GM12878 (cell line): ENCODE measurements at regions of chrX and their contacts with region 1.

Region 1: GRCh38 chrX:4547213-4547836 is 833.9 kb upstream of the PRKX start:
- DNase-seq: peak; percentile 5
- ATAC-seq: peak; percentile 64
- H3K4me3 ChIP-seq: no peak overlapping the region
- H3K27ac ChIP-seq: no peak overlapping the region
- H3K4me1 ChIP-seq: no peaks in the 10 kb centered on the region
- H3K27me3 ChIP-seq: no peaks in the 10 kb centered on the region
- CTCF ChIP-seq: peak; percentile 80 to 89 (median 82)
- EP300 ChIP-seq: no peak
- POLR2A ChIP-seq: no peak
- RAD21 ChIP-seq: peak; percentile 85

Region 2: GRCh38 chrX:3962511-3963311 is 584.6 kb before region 1 on chrX:
- CTCF ChIA-PET with region 1: interaction called, 8 read pairs
- POLR2A ChIA-PET with region 1: no interaction called
- RAD21 ChIA-PET with region 1: interaction called, 11 read pairs
- SMC1A ChIA-PET with region 1: interaction called, 10 read pairs
- in situ Hi-C with region 1: no loop called
- intact Hi-C with region 1: loop called (anchors 5 kb)
- DNase-seq: no peak
- ATAC-seq: peak; percentile 69
- H3K4me3 ChIP-seq: no peak overlapping the region
- H3K27ac ChIP-seq: no peak overlapping the region
- H3K4me1 ChIP-seq: no peaks in the 10 kb centered on the region
- H3K27me3 ChIP-seq: no peaks in the 10 kb centered on the region
- CTCF ChIP-seq: peak; percentile 47 to 57 (median 49); a peak in 5 of 6 replicates
- EP300 ChIP-seq: no peak
- POLR2A ChIP-seq: no peak
- RAD21 ChIP-seq: peak; percentile 36

Region 3: GRCh38 chrX:4735259-4735658 is 187.9 kb after region 1 on chrX:
- CTCF ChIA-PET with region 1: no interaction called
- POLR2A ChIA-PET with region 1: no interaction called
- RAD21 ChIA-PET with region 1: no interaction called
- SMC1A ChIA-PET with region 1: no interaction called
- in situ Hi-C with region 1: no loop called
- intact Hi-C with region 1: no loop called
- DNase-seq: no peak
- ATAC-seq: no peak
- H3K4me3 ChIP-seq: no peak overlapping the region
- H3K27ac ChIP-seq: no peak overlapping the region
- H3K4me1 ChIP-seq: no peaks in the 10 kb centered on the region
- H3K27me3 ChIP-seq: no peaks in the 10 kb centered on the region
- CTCF ChIP-seq: no peak
- EP300 ChIP-seq: no peak
- POLR2A ChIP-seq: no peak
- RAD21 ChIP-seq: no peak

Region 4: GRCh38 chrX:5113128-5113527 is 565.8 kb after region 1 on chrX:
- CTCF ChIA-PET with region 1: interaction called, 5 read pairs
- POLR2A ChIA-PET with region 1: no interaction called
- RAD21 ChIA-PET with region 1: no interaction called
- SMC1A ChIA-PET with region 1: no interaction called
- in situ Hi-C with region 1: no loop called
- intact Hi-C with region 1: loop called (anchors 1 kb)
- DNase-seq: no peak
- ATAC-seq: peak; percentile 44; the same call in 2 of the 3 replicates
- H3K4me3 ChIP-seq: no peak overlapping the region
- H3K27ac ChIP-seq: no peak overlapping the region
- H3K4me1 ChIP-seq: no peaks in the 10 kb centered on the region
- H3K27me3 ChIP-seq: no peaks in the 10 kb centered on the region
- CTCF ChIP-seq: peak in 2 of 3 experiments; percentile 4 to 35; a peak in 2 of 6 replicates
- EP300 ChIP-seq: no peak
- POLR2A ChIP-seq: no peak
- RAD21 ChIP-seq: peak; percentile 42; the same call in 1 of the 2 replicates

Region 5: GRCh38 chrX:5876984-5877596 is 1329.8 kb after region 1 on chrX:
- CTCF ChIA-PET with region 1: interaction called, 3 read pairs
- POLR2A ChIA-PET with region 1: no interaction called
- RAD21 ChIA-PET with region 1: no interaction called
- SMC1A ChIA-PET with region 1: no interaction called
- in situ Hi-C with region 1: no loop called
- intact Hi-C with region 1: loop called (anchors 1 kb)
- DNase-seq: no peak
- ATAC-seq: peak; percentile 34; the same call in 1 of the 3 replicates
- H3K4me3 ChIP-seq: no peak overlapping the region
- H3K27ac ChIP-seq: no peak overlapping the region
- H3K4me1 ChIP-seq: no peaks in the 10 kb centered on the region
- H3K27me3 ChIP-seq: no peaks in the 10 kb centered on the region
- CTCF ChIP-seq: peak; percentile 43 to 50 (median 48); a peak in 4 of 6 replicates
- EP300 ChIP-seq: no peak
- POLR2A ChIP-seq: no peak
- RAD21 ChIP-seq: peak; percentile 90